Thyroid gland (tissue), 4 donors: ENCODE measurements at regions of chr14 and their contacts with region 1.

Region 1: DNA sequence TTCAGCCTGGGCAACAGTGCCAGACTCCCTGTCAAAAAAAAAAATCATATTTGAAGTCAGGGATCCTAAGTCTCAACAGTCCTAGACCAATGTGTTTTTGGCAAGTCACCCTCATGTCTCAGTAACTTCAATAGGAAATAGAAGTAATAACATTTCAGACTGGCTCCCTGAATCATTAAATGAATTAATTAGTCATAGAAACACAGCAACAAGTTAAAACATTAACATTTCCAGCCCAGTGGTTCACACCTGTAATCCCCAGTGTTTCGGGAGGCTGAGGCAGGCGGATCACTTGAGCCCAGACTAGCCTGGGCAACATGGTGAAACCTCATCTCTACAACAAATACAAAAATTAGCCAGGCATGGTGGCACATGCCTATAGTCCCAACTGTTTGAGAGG is 125.2 kb downstream of the GTF2A1 start:
- DNase-seq: no peak
- H3K4me3 ChIP-seq: no peak overlapping the region
- H3K27ac ChIP-seq: peak overlapping the region in 2 of 3 donors; percentile 27 to 71
- H3K4me1 ChIP-seq: peaks cover 12 to 26% of the 10 kb centered on the region in 2 donors
- H3K27me3 ChIP-seq: no peaks in the 10 kb centered on the region
- CTCF ChIP-seq: no peak
- POLR2A ChIP-seq: no peak

Region 2: GRCh38 chr14:80310938-80311750 is 784.4 kb before region 1 on chr14:
- intact Hi-C with region 1: no loop called
- DNase-seq: no peak
- H3K4me3 ChIP-seq: no peak overlapping the region
- H3K27ac ChIP-seq: no peak overlapping the region
- H3K4me1 ChIP-seq: no peaks in the 10 kb centered on the region
- H3K27me3 ChIP-seq: no peaks in the 10 kb centered on the region
- CTCF ChIP-seq: no peak
- POLR2A ChIP-seq: no peak

Region 3: GRCh38 chr14:81144858-81145603 is 49.5 kb after region 1 on chr14:
- intact Hi-C with region 1: loop called (anchors 5 kb)
- DNase-seq: no peak
- H3K4me3 ChIP-seq: no peak overlapping the region
- H3K27ac ChIP-seq: peak overlapping the region; percentile 42 to 64 (median 64)
- H3K4me1 ChIP-seq: peaks cover 11 to 24% of the 10 kb centered on the region in 2 donors
- H3K27me3 ChIP-seq: no peaks in the 10 kb centered on the region
- CTCF ChIP-seq: no peak
- POLR2A ChIP-seq: no peak

Region 4: DNA sequence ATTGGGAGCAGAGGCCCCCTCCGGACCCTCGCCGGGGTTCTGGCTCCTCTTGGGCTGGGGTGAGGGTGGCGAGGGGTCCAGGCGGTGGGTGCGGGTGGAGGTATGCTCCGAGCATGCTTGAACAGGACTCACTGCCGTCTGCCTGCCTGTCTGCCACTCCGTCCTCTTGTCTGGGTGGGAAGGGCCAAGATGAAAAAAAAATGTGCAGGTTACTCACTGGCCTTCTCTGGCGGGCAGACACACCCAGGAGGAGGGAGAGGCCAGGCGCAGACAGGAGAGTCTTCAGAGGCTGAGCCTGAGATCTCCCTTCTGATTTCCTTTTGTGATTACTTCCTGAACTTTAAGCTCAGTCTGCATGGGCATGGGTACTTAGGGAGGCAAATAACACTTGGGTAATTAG is 228.5 kb after region 1 on chr14:
- intact Hi-C with region 1: no loop called
- DNase-seq: peak; percentile 84 to 87
- H3K4me3 ChIP-seq: peak overlapping the region in 1 of 3 donors; percentile 21
- H3K27ac ChIP-seq: peak overlapping the region; percentile 51 to 79 (median 73)
- H3K4me1 ChIP-seq: peaks cover 26 to 42% of the 10 kb centered on the region in 2 donors
- H3K27me3 ChIP-seq: no peaks in the 10 kb centered on the region
- CTCF ChIP-seq: no peak
- POLR2A ChIP-seq: peak in 1 of 2 donors; percentile 89